H1 (cell line): ENCODE measurements at regions of chr7 and their contacts with region 1.

Region 1: DNA sequence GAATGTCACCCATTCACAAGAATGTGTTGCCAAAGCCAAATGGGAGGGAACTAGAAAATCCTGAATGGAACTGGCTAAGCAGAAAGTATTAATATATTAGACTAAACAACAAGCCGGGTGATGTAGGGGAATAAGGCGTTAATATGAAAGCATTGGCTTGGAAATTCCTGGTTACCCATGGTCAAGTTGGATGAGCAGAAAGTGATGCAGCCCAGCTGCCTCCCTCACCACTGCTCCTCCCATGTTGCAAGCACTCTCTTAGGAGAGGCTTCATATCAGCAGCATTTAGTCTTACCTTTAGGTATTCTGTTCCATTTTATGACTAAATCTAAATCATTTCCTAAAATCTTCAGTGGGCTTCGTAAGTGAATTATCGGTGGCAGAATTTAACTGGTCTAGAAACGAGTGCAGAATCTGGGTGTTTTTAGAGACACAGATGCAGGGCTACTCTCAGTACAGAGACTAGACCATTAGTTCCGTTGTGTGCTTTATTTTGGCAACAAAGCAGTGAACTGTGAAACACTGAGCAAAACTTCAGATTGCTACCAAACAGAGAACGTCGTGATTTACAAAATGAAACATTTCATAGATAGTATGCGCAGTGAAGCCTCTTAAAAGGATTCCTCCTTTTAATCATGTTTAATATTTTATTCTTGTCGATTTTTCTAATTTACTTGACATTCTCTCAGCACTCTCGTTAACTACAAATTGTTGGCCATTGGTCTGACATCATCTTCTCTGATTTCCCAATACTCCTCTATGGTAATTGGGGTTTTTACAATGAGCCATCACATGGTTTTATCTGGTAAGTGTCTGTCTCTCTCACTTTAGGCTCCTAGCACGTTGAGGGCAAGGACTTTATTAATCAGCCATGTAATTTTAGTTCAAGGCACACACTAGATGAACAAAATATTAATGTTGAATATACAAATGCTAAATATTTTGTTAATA is 22.0 kb upstream of the HGF start:
- DNase-seq: no peak
- H3K4me3 ChIP-seq: no peak overlapping the region
- H3K27ac ChIP-seq: no peak overlapping the region
- H3K4me1 ChIP-seq: peaks cover 0 to 2% (median 0%) of the 10 kb centered on the region in 4 experiments; a peak in 1 of 7 replicates
- H3K27me3 ChIP-seq: no peaks in the 10 kb centered on the region
- CTCF ChIP-seq: no peak
- EP300 ChIP-seq: no peak
- POLR2A ChIP-seq: no peak
- RAD21 ChIP-seq: no peak

Region 2: DNA sequence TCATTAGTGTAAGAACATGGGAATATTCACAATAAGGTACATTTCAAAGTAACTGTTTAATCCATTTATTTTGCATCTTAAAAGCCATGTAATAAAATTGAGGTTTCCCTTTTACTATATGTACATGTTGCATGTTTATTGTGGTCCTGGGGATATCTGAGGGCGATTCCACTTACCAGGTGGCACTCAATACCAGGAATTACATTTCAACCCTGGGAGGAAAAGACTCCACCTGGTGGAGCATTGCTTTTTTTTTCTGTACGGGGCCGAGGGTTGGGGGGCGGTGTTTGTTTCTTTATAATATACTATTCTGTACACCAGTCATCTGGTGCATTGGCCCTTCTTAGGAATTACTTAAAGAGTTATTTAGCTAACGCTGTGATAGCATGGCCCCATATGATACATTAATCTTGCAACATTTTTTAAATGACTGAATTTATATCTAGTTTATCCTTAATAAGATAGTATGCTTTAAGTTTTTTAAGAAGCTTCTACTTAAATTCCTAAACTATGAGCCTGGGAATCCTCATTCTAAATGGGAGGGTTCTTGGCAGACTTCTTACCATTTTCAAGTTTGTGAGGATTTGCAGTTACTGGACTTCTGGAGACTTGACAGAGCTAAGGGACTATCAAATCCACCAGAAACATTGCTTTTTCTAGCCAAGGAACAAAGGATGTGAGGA is 14.8 kb before region 1 on chr7:
- CTCF ChIA-PET with region 1: interaction called, 16 read pairs
- POLR2A ChIA-PET with region 1: no interaction called
- DNase-seq: no peak
- H3K4me3 ChIP-seq: no peak overlapping the region
- H3K27ac ChIP-seq: no peak overlapping the region
- H3K4me1 ChIP-seq: no peaks in the 10 kb centered on the region
- H3K27me3 ChIP-seq: no peaks in the 10 kb centered on the region
- CTCF ChIP-seq: peak; percentile 5 to 50 (median 49)
- EP300 ChIP-seq: no peak
- POLR2A ChIP-seq: no peak
- RAD21 ChIP-seq: peak; percentile 36 to 66